ENCODE measurements at regions of chr5 and their contacts with region 1.

Region 1: GRCh38 chr5:36079200-36079761 is 12.6 kb upstream of the UGT3A2 start:
- DNase-seq: peak; percentile 61
- ATAC-seq: peak; percentile 99
- H3K4me3 ChIP-seq: no peak overlapping the region
- H3K27ac ChIP-seq: no peak overlapping the region
- H3K4me1 ChIP-seq: peaks cover 0 to 4% of the 10 kb centered on the region in 2 experiments; a peak in 1 of 4 replicates
- H3K27me3 ChIP-seq: no peaks in the 10 kb centered on the region
- CTCF ChIP-seq: peak; percentile 32 to 70 (median 69); a peak in 4 of 6 replicates
- POLR2A ChIP-seq: no peak
- RAD21 ChIP-seq: peak; percentile 64

Region 2: GRCh38 chr5:36089989-36090564 is 10.8 kb after region 1 on chr5:
- CTCF ChIA-PET with region 1: interaction called, 26 read pairs
- POLR2A ChIA-PET with region 1: interaction called, 4 read pairs
- RAD21 ChIA-PET with region 1: interaction called in 1 of 2 experiments, 5 read pairs
- intact Hi-C with region 1: no loop called
- DNase-seq: peak; percentile 29
- ATAC-seq: peak; percentile 98
- H3K4me3 ChIP-seq: no peak overlapping the region
- H3K27ac ChIP-seq: no peak overlapping the region
- H3K4me1 ChIP-seq: peaks cover 0 to 5% of the 10 kb centered on the region in 2 experiments; a peak in 1 of 4 replicates
- H3K27me3 ChIP-seq: no peaks in the 10 kb centered on the region
- CTCF ChIP-seq: peak; percentile 17 to 52 (median 50); a peak in 4 of 6 replicates
- POLR2A ChIP-seq: no peak
- RAD21 ChIP-seq: no peak

Region 3: GRCh38 chr5:36177715-36178523 is 98.6 kb after region 1 on chr5:
- CTCF ChIA-PET with region 1: interaction called, 14 read pairs
- POLR2A ChIA-PET with region 1: no interaction called
- RAD21 ChIA-PET with region 1: no interaction called
- intact Hi-C with region 1: no loop called
- DNase-seq: peak; percentile 7
- ATAC-seq: peak; percentile 82
- H3K4me3 ChIP-seq: no peak overlapping the region
- H3K27ac ChIP-seq: no peak overlapping the region
- H3K4me1 ChIP-seq: no peaks in the 10 kb centered on the region
- H3K27me3 ChIP-seq: no peaks in the 10 kb centered on the region
- CTCF ChIP-seq: peak; percentile 41 to 66 (median 42); a peak in 3 of 6 replicates
- POLR2A ChIP-seq: no peak
- RAD21 ChIP-seq: peak; percentile 55

Region 4: GRCh38 chr5:36397901-36398536 is 318.7 kb after region 1 on chr5:
- CTCF ChIA-PET with region 1: interaction called, 5 read pairs
- POLR2A ChIA-PET with region 1: no interaction called
- RAD21 ChIA-PET with region 1: no interaction called
- intact Hi-C with region 1: loop called (anchors 5 kb)
- DNase-seq: peak; percentile 28
- ATAC-seq: peak; percentile 74
- H3K4me3 ChIP-seq: no peak overlapping the region
- H3K27ac ChIP-seq: no peak overlapping the region
- H3K4me1 ChIP-seq: no peaks in the 10 kb centered on the region
- H3K27me3 ChIP-seq: no peaks in the 10 kb centered on the region
- CTCF ChIP-seq: peak; percentile 35 to 56 (median 46); a peak in 5 of 6 replicates
- POLR2A ChIP-seq: no peak
- RAD21 ChIP-seq: peak; percentile 67

Region 5: DNA sequence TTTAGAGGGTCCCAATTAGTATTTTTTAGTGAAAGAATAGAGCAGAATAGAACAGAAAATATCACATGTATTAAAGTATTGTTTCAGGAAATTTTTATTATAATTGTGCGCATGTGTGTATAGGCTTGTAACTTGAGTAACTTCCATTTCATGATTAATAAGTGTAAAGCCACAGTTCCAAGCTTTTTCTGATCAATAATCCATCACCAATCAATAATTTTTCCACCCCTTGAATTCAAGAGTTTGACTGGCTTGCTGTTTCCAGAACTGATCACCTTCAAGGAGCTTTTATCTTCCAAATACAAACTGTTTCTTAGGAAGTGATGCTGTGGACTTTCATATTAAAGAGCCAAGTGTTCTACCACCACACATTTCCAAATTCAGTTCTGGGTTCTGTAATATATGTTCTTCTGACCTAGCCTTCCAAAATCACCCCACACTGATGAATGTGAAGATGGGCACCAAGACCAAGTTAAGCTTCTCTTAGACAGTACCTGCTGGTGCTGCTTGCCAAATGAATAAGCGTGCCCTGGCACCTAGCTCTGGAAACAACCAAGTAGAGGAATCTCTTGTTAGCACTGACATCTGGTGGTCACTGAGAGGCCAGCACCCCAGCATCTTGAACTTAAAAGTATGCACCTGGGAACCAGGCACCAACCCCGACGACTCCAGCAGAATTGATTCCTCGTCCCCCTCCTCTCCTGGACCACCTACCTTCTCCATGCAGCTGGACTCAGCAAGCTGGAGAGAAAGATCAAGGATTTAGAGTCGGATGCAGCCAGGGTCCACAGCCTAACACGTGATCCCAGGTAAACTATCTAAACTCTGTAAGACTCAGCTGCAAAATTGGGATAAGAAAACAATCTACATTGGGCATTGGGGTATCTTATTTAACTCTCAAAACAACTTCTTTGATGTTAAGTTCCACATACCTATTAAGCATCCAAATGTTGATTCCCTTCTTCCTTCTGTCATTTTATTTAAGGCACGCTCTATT is 616.7 kb after region 1 on chr5:
- CTCF ChIA-PET with region 1: interaction called, 16 read pairs
- POLR2A ChIA-PET with region 1: no interaction called
- RAD21 ChIA-PET with region 1: interaction called in 1 of 2 experiments, 3 read pairs
- intact Hi-C with region 1: loop called (anchors 5 kb)
- DNase-seq: peak; percentile 69
- ATAC-seq: peak; percentile 79
- H3K4me3 ChIP-seq: no peak overlapping the region
- H3K27ac ChIP-seq: no peak overlapping the region
- H3K4me1 ChIP-seq: peaks cover 1 to 10% of the 10 kb centered on the region in 2 experiments; a peak in 2 of 4 replicates
- H3K27me3 ChIP-seq: no peaks in the 10 kb centered on the region
- CTCF ChIP-seq: peak; percentile 67 to 86 (median 85)
- POLR2A ChIP-seq: no peak
- RAD21 ChIP-seq: peak; percentile 82